Stomach (tissue), 19 donors: ENCODE measurements at regions of chr2 and their contacts with region 1.

Region 1: DNA sequence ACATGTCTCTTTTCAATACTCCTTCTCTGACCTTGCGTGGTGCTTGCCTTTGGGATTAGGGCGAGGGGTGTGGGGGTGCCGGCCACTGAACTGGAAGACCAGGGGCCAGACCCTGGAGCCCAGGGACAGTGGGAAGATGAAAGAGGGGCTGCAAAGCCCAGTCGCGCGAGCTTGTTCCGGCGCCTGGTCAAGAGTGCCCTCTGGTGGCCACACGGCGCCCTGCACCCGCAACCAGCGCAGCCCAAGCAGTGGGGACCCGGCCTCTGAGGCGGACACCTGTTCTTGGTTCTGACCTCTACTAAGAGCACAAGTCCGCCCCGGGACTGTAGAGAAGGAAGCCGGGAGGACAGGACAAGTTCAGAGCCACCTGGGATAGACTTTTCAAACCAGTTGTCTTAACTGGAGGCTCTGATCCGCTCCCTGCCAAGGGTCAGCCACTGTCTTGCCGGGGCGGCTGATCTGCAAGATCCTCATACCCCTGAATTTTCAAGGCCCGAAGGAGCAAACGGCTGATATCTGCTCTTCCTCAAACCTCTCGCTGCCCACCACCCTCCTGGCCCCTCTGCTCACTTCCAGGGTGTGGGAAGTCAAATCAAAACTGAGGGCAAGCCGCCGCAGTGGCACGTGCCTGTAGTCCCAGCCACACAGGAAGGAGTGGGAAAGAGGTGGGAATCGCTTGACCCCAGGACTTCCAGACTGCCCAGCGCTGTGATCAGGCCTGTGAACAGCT is 14.9 kb upstream of the MSH6 start:
- DNase-seq: peak; percentile 77 to 86
- H3K4me3 ChIP-seq: no peak overlapping the region
- H3K27ac ChIP-seq: no peak overlapping the region
- H3K4me1 ChIP-seq: peaks cover 0 to 6% (median 5%) of the 10 kb centered on the region in 4 donors
- H3K27me3 ChIP-seq: peaks cover 0 to 3% (median 0%) of the 10 kb centered on the region in 3 donors
- CTCF ChIP-seq: peak in 5 of 7 experiments; percentile 82 to 100 (median 99)
- EP300 ChIP-seq: no peak
- POLR2A ChIP-seq: no peak

Region 2: GRCh38 chr2:47339745-47340541 is 428.1 kb before region 1 on chr2:
- intact Hi-C with region 1: loop called (anchors 10 kb)
- DNase-seq: peak; percentile 35 to 78
- H3K4me3 ChIP-seq: no peak overlapping the region
- H3K27ac ChIP-seq: peak overlapping the region; percentile 5 to 56 (median 22)
- H3K4me1 ChIP-seq: peaks cover 0 to 43% (median 31%) of the 10 kb centered on the region in 4 donors
- H3K27me3 ChIP-seq: no peaks in the 10 kb centered on the region
- CTCF ChIP-seq: no peak
- EP300 ChIP-seq: no peak
- POLR2A ChIP-seq: no peak

Region 3: GRCh38 chr2:47437287-47437686 is 330.8 kb before region 1 on chr2:
- intact Hi-C with region 1: loop called (anchors 10 kb)
- DNase-seq: peak in 1 of 2 donors; percentile 53
- H3K4me3 ChIP-seq: no peak overlapping the region
- H3K27ac ChIP-seq: no peak overlapping the region
- H3K4me1 ChIP-seq: no peaks in the 10 kb centered on the region
- H3K27me3 ChIP-seq: no peaks in the 10 kb centered on the region
- CTCF ChIP-seq: peak in 2 of 7 experiments; percentile 27 to 36
- EP300 ChIP-seq: no peak
- POLR2A ChIP-seq: no peak